ENCODE measurements at regions of chr11 and their contacts with region 1.

Region 1: DNA sequence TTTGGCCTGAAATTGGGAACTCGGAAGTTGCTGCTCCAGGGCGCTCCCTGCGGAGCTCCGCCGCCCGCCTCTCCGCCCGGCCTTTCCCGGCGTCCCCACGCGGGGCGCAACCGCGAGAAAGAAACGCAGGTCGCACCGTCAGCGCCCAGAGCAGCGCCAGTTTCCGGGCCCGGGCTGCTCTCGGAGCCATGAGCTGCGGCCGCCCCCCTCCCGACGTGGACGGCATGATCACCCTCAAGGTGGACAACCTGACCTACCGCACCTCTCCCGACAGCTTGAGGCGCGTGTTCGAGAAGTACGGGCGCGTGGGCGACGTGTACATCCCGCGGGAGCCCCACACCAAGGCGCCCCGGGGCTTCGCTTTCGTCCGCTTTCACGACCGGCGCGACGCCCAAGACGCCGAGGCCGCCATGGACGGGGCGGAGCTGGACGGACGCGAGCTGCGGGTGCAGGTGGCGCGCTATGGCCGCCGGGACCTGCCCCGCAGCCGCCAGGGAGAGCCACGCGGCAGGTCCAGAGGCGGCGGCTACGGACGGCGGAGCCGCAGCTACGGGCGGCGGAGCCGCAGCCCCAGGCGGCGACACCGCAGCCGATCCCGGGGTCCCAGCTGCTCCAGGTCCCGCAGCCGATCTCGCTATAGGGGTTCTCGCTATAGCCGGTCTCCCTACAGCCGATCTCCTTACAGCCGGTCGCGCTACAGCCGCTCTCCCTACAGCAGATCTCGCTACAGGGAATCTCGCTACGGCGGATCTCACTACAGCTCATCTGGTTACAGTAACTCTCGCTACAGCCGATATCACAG is 521 bp downstream of the SRSF8 start:
- DNase-seq: peak; percentile 78
- H3K4me3 Mint-ChIP-seq: peak overlapping the region; percentile 88
- H3K27ac Mint-ChIP-seq: peak overlapping the region; percentile 98
- H3K4me1 Mint-ChIP-seq: peaks cover 27% of the 10 kb centered on the region
- H3K27me3 Mint-ChIP-seq: peaks cover 9% of the 10 kb centered on the region

Region 2: GRCh38 chr11:95024958-95025357 is 42.3 kb before region 1 on chr11 and contains the start of gene KDM4E:
- CTCF ChIA-PET with region 1: no interaction called
- POLR2A ChIA-PET with region 1: no interaction called
- DNase-seq: no peak
- H3K4me3 Mint-ChIP-seq: no peak within 1 kb of the TSS
- H3K27ac Mint-ChIP-seq: no peak within 1 kb of the TSS
- H3K4me1 Mint-ChIP-seq: no peaks in the 10 kb centered on the region
- H3K27me3 Mint-ChIP-seq: no peaks in the 10 kb centered on the region
- total RNA-seq, gene KDM4E: not detected

Region 3: GRCh38 chr11:95084509-95084908 is 17.3 kb after region 1 on chr11:
- CTCF ChIA-PET with region 1: interaction called, 165 read pairs
- POLR2A ChIA-PET with region 1: interaction called, 9 read pairs
- DNase-seq: no peak
- H3K4me3 Mint-ChIP-seq: no peak overlapping the region
- H3K27ac Mint-ChIP-seq: no peak overlapping the region
- H3K4me1 Mint-ChIP-seq: peaks cover 29% of the 10 kb centered on the region
- H3K27me3 Mint-ChIP-seq: no peaks in the 10 kb centered on the region

Region 4: DNA sequence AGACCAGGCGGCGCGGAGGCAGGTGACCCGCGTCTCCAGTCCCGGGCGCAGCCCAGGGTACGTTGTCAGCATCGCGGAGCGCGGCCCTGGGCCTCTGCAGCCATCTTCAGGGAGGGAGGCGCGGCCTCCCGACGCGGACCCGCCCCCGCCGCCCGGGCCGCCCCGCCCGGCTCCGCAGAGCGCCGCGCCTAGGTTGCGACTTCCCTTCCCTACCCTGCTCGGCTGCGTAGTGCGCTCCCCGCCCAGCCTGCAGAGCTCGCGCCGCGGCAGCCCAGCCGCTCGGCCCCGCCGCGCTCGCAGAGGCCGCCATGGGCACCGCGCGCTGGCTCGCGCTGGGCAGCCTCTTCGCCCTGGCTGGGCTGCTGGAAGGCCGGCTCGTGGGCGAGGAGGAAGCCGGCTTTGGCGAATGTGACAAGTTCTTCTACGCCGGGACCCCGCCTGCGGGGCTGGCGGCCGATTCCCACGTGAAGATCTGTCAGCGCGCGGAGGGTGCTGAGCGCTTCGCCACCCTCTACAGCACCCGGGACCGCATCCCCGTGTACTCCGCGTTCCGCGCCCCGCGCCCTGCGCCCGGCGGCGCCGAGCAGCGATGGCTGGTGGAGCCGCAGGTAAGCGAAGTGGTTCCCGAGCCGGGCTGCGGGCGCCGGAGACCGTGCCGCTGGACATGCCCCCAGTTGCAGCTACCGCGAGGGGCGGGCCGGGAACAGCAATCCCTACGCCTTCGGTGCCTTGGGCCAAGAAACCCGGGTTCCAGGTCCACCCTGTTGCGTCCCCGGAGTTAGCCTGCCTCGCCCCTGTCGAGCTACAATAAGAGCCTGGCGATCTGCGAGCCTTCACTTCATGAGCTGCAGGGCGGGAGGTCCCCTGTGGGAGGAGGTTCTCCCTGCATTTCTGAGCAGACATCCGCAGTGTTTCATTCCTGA is 22.6 kb after region 1 on chr11 and contains the start of gene ENDOD1:
- CTCF ChIA-PET with region 1: interaction called, 165 read pairs
- POLR2A ChIA-PET with region 1: interaction called, 9 read pairs
- DNase-seq: peak; percentile 83
- H3K4me3 Mint-ChIP-seq: peak within 1 kb of the TSS; percentile 85
- H3K27ac Mint-ChIP-seq: peak within 1 kb of the TSS; percentile 97
- H3K4me1 Mint-ChIP-seq: peaks cover 63% of the 10 kb centered on the region
- H3K27me3 Mint-ChIP-seq: no peaks in the 10 kb centered on the region
- total RNA-seq, gene ENDOD1: 15.8 to 16.8 TPM

Region 5: GRCh38 chr11:95231127-95231880 is 164.1 kb after region 1 on chr11 and contains the start of gene SESN3:
- CTCF ChIA-PET with region 1: no interaction called
- POLR2A ChIA-PET with region 1: interaction called, 10 read pairs
- DNase-seq: peak; percentile 99
- H3K4me3 Mint-ChIP-seq: no peak within 1 kb of the TSS
- H3K27ac Mint-ChIP-seq: peak within 1 kb of the TSS; percentile 92
- H3K4me1 Mint-ChIP-seq: peaks cover 46% of the 10 kb centered on the region
- H3K27me3 Mint-ChIP-seq: no peaks in the 10 kb centered on the region
- total RNA-seq, gene SESN3: 47.6 to 50.6 TPM